ENCODE measurements at regions of chr4 and their contacts with region 1.

Region 1: DNA sequence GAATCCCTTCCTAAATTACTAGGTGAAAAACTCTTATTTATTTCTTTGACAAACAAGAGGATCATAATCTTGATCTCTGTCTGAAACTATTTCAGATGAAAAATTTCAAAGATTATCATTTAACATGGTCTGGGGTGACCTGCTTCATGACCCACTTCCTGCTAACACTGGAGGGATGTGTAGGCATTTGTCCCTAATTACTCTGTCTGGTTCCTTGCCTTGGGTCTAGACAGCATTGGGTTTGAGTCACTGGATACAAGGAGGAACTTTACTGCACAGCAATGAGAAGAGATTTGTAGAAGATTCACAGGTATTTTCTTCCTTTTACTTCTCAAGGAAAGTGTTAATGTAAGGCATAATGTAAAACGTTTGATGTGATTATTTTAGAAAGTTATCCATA is 67.9 kb downstream of the LEF1 start:
- DNase-seq: no peak
- CTCF ChIP-seq: no peak

Region 2: GRCh38 chr4:108113229-108113628 is 12.4 kb after region 1 on chr4:
- CTCF ChIA-PET with region 1: interaction called, 15 read pairs
- POLR2A ChIA-PET with region 1: no interaction called
- DNase-seq: no peak
- CTCF ChIP-seq: no peak

Measured in GM10248 (cell line).